HEK293T (cell line): ENCODE measurements at regions of chr1 and their contacts with region 1.

Region 1: GRCh38 chr1:44594871-44595746 is 79.2 kb downstream of the TMEM53 start:
- DNase-seq: peak; percentile 91

Region 2: GRCh38 chr1:44377925-44378784 is 217.0 kb before region 1 on chr1:
- CTCF ChIA-PET with region 1: interaction called, 18 read pairs
- POLR2A ChIA-PET with region 1: no interaction called
- DNase-seq: peak; percentile 76

Region 3: DNA sequence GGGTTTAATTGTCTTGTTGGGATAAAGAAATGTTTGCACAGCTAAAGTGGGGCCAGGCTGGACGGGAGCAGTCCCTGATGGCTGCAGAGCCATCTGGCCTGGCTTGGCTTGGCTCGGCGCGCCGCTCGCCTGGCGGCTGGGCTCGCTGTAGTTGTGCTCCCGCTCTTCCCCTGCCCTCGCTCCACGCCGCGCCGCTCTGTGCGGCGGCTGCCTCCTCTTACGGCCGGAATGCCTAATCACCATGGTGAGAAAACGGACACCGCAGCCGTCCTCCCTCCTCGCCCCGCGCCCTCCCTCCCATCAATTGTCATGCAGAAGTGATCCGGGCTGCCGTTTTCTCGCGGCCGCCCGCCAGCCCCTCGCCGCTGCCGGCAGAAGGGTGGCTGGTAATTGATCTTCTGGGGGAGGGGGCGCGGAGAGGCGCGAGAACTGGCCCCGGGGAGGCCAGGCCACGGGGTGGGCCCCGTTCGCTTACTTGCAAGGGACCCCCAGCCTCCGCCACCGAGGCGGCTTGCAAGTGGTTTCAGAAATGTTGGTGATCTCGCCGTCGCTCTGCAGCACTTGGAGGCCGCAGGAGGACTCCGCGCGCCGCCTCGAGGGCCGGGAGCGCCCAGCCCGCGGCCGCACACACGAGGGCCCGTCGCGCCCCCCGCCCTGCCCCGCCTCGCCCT is 177.6 kb before region 1 on chr1:
- CTCF ChIA-PET with region 1: no interaction called
- POLR2A ChIA-PET with region 1: no interaction called
- DNase-seq: peak; percentile 71

Region 4: DNA sequence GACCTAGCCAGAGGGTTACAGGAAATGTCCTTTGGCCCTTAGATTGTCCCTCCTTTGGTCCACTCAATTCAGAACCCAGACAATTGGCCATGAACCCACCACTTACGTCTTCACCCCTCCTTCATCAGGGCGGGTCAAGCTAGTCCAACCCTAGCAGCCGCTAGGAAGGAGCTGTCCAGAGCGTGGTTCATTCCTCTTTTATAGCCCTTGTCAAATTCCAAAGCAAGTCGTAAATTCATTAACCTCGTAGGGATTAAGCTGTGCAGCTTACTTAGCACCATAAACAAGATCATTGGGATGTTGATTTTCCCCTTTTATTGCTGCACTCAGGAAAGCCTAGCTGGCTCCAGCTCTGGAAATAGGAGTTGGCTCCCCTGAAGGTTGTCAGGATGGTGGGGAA is 10.9 kb before region 1 on chr1:
- CTCF ChIA-PET with region 1: interaction called, 11 read pairs
- POLR2A ChIA-PET with region 1: no interaction called
- DNase-seq: peak; percentile 24

Region 5: DNA sequence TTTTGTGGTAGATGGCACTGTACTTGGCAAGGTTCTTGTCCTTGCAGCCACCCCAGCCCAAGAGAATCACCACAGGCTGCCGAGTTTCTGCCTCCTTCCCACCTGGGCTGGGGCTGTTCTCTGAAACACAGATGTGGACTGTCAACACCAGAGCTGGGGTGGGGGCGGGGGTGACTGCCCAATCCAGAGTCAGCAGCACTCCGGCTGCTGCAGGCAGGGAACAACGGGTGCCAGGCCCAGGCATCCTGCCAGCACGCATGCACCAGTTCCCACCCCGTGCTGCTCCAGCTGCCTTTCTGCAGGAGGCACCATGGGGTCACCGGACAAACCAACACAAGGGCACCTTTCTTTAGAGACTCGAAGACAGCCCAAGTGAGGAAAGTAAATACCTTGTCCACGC is 65.1 kb after region 1 on chr1:
- CTCF ChIA-PET with region 1: no interaction called
- POLR2A ChIA-PET with region 1: no interaction called
- DNase-seq: no peak